ENCODE measurements at regions of chr6 and their contacts with region 1.

Region 1: GRCh38 chr6:148464319-148465010 is 121.8 kb downstream of the SASH1 start:
- DNase-seq: peak in 9 of 10 donors; percentile 19 to 84 (median 64)
- H3K4me3 ChIP-seq: peak overlapping the region in 2 of 59 donors; percentile 2 to 4
- H3K27ac ChIP-seq: peak overlapping the region; percentile 25 to 94 (median 84)
- H3K27me3 ChIP-seq: no peaks in the 10 kb centered on the region
- CTCF ChIP-seq: peak; percentile 89 to 100 (median 97)

Region 2: DNA sequence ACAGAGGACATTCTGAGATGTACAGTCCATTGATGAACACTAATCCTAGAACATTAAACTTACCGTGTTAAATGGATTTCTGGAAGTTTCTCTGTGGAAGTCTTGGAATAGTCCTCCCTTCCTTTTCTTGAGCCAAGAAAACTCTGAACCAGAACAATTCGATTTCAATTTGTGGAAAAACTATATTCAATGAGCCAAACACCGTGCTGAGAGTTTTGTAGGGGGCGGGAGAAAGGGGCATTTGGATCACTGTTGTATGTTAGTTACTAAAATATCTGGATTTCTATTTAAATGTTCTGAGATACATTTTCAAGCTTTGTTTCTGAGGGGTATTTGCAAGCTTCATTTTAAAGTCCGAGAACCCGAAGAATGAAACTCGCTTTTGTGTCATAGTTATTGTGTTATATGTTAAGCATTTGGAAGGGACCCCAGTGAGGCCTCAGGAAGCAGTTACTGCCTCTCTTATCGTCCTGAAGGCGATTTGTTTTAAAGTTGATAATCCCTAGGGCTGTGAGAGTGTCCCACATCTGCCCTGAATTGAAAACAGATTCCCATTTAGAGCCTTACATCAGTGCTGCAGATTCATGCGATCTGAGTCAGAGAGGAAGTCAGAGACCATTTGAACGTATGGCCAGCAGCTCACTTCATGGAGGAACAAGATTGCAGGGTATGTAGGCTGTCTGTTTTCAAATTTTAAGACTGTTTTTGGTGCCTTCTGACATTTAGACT is 192.6 kb before region 1 on chr6:
- intact Hi-C with region 1: loop called (anchors 2 to 10 kb)
- DNase-seq: no peak
- H3K4me3 ChIP-seq: peak overlapping the region in 7 of 59 donors; percentile 0 to 32 (median 13)
- H3K27ac ChIP-seq: peak overlapping the region in 20 of 59 donors; percentile 2 to 63 (median 30)
- H3K27me3 ChIP-seq: no peaks in the 10 kb centered on the region
- CTCF ChIP-seq: no peak

Region 3: GRCh38 chr6:148530394-148530953 is 66.0 kb after region 1 on chr6:
- intact Hi-C with region 1: loop called (anchors 5 kb)
- DNase-seq: no peak
- H3K4me3 ChIP-seq: peak overlapping the region in 46 of 59 donors; percentile 1 to 61 (median 32)
- H3K27ac ChIP-seq: peak overlapping the region; percentile 6 to 98 (median 84)
- H3K27me3 ChIP-seq: no peaks in the 10 kb centered on the region
- CTCF ChIP-seq: peak in 4 of 56 donors; percentile 5 to 33 (median 12)